Activated CD4-positive, alpha-beta T cell treated with anti-CD3 and anti-CD28 coated beads for 36 hours (primary cell): ENCODE measurements at regions of chr14 and their contacts with region 1.

Region 1: GRCh38 chr14:81453166-81453766 is 53.1 kb upstream of the STON2 start:
- DNase-seq: peak; percentile 70
- ATAC-seq: peak; percentile 61
- H3K4me3 Mint-ChIP-seq: no peak overlapping the region
- H3K27ac Mint-ChIP-seq: no peak overlapping the region
- H3K4me1 Mint-ChIP-seq: peaks cover 2% of the 10 kb centered on the region
- H3K27me3 Mint-ChIP-seq: peaks cover 4% of the 10 kb centered on the region

Region 2: GRCh38 chr14:81436296-81437138 is 16.7 kb before region 1 on chr14:
- CTCF ChIA-PET with region 1: interaction called, 15 read pairs
- POLR2A ChIA-PET with region 1: interaction called, 3 read pairs
- intact Hi-C with region 1: no loop called
- DNase-seq: peak; percentile 69
- ATAC-seq: peak; percentile 88
- H3K4me3 Mint-ChIP-seq: peak overlapping the region; percentile 55
- H3K27ac Mint-ChIP-seq: no peak overlapping the region
- H3K4me1 Mint-ChIP-seq: peaks cover 10% of the 10 kb centered on the region
- H3K27me3 Mint-ChIP-seq: peaks cover 69% of the 10 kb centered on the region

Region 3: GRCh38 chr14:81464247-81465002 is 11.2 kb after region 1 on chr14:
- CTCF ChIA-PET with region 1: interaction called, 26 read pairs
- POLR2A ChIA-PET with region 1: no interaction called
- intact Hi-C with region 1: no loop called
- DNase-seq: peak; percentile 69
- ATAC-seq: peak; percentile 66
- H3K4me3 Mint-ChIP-seq: peak overlapping the region; percentile 70
- H3K27ac Mint-ChIP-seq: peak overlapping the region; percentile 85
- H3K4me1 Mint-ChIP-seq: peaks cover 7% of the 10 kb centered on the region
- H3K27me3 Mint-ChIP-seq: no peaks in the 10 kb centered on the region

Region 4: DNA sequence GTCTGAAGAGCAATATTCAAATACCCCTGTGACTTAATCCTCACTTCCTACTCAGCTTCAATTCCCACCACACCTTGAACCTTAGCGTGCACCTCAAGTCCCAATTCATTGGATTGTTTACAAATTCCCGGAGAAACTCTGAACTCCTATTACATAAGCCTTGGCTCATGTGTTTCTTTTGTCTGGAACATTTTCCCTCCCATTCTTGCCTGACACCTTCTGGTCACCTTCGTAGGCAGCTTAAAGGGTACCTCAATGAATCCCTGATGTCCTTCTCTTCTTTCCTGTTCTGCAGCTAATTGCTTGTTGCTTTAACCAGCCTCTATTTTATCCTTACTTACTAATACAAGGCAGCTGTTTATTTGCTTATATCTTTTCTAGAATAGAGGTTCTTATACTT is 165.4 kb after region 1 on chr14:
- CTCF ChIA-PET with region 1: no interaction called
- POLR2A ChIA-PET with region 1: no interaction called
- intact Hi-C with region 1: no loop called
- DNase-seq: no peak
- ATAC-seq: no peak
- H3K4me3 Mint-ChIP-seq: no peak overlapping the region
- H3K27ac Mint-ChIP-seq: no peak overlapping the region
- H3K4me1 Mint-ChIP-seq: no peaks in the 10 kb centered on the region
- H3K27me3 Mint-ChIP-seq: peaks cover 9% of the 10 kb centered on the region

Region 5: DNA sequence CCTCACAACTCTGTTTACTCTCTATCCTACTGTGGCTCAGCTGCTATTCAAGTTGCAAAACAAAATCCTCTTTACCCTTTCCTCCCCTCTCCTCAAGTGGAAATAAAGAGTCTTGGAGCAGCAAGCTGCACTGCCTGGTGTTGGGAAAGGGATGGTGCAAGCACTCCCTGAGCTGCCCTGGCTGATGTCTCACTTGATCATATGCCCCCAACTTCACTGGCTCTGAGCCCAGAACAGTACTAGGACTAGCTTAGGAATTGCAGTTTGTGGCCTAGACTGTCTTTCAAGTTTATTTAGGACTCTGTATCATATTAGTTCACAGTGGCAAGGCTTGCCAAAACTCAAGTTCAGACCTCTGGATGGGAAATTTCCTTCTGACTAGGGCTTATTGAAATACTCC is 1764.2 kb after region 1 on chr14:
- CTCF ChIA-PET with region 1: no interaction called
- POLR2A ChIA-PET with region 1: no interaction called
- intact Hi-C with region 1: no loop called
- DNase-seq: no peak
- ATAC-seq: no peak
- H3K4me3 Mint-ChIP-seq: no peak overlapping the region
- H3K27ac Mint-ChIP-seq: no peak overlapping the region
- H3K4me1 Mint-ChIP-seq: no peaks in the 10 kb centered on the region
- H3K27me3 Mint-ChIP-seq: no peaks in the 10 kb centered on the region